Mammary epithelial cell (primary cell): ENCODE measurements at regions of chr4 and their contacts with region 1.

Region 1: DNA sequence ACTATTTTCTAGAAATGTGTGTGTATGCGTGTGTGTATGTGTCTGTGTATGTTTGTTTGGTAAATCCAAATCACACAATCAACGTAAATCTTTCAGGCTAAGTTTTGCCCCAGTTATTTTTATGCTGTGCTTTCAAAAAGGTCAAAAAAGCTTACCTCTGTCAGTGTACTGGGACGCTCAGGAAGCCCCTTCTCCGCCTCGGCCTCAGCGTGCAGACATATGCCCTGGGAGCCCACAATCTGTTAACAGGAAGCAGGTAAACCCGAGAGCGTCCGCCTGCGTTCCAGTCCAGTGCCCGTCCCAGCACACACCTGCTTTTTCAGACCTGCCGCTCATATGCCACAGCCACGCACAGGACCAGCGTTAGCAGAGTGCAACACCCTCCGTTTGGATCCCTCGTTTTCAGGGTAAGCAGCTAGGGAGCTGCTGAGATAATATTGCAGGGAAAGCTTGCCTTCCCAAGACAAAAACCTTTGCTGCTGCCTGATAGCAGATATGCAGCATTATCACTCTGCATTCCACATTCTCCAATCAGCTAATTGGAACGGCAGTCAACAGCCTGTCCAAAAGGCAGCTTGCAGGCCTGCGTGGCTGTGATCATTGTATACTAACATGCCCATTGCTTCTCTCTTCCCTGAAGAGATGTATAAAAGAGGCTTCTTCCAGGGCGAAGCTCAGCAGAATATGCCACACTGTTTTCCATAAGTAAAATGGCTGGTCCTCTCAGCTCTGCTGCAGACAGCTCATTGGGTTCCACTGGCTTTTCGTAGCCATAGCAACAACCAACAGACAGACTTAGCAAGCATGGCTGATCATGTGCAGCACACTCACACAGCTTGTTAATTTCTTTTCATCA is at the start of gene SORBS2:
- DNase-seq: peak; percentile 70
- H3K4me3 ChIP-seq: peak within 1 kb of the TSS; percentile 36 to 52 (median 47)
- H3K27ac ChIP-seq: peak within 1 kb of the TSS; percentile 33
- H3K4me1 ChIP-seq: peaks cover 9% of the 10 kb centered on the region
- H3K27me3 ChIP-seq: no peaks in the 10 kb centered on the region
- CTCF ChIP-seq: no peak
- total RNA-seq, gene SORBS2: 5.6 to 8.5 TPM

Region 2: DNA sequence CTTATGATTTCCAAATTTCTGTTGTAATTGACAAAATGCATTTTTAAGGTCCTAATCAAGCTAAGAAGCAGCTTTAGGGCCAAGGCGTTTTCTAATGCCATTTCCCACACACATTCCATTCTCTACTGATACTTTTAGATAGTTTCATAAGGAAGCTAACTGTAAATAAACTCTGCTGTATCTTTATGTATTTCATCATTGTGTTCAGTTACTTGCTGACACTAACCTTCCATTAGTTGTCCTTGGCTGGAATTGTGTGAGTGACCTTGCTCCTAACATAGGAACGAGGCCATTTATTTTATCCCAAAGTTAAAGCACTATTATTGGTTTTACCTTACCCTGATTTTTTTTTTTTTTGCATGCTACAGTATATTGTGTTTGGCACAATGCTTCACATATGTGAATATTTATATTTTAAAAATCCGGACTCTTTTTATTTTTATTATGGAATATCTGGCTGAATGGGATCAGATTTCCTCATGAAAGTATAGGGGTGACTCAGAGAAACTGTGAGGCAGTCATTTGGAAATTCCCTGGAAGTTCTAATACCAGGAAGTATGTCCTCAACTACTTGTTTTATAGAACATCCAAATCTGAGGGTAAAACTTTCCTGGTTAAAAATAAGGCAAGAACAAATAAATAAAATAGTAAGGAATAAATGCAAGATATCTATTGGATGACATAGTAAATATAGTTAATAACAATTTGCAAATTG is 62.9 kb after region 1 on chr4:
- CTCF ChIA-PET with region 1: no interaction called
- dilution Hi-C with region 1: no loop called
- in situ Hi-C with region 1: no loop called
- intact Hi-C with region 1: loop called (anchors 5 kb)
- DNase-seq: peak; percentile 65
- H3K4me3 ChIP-seq: no peak overlapping the region
- H3K27ac ChIP-seq: peak overlapping the region; percentile 75
- H3K4me1 ChIP-seq: peaks cover 4% of the 10 kb centered on the region
- H3K27me3 ChIP-seq: no peaks in the 10 kb centered on the region
- CTCF ChIP-seq: no peak